ENCODE measurements at regions of chr12 and their contacts with region 1.

Region 1: GRCh38 chr12:22088886-22089285 is 42.9 kb downstream of the CMAS start:
- DNase-seq: no peak

Region 2: GRCh38 chr12:22014783-22015144 is 74.1 kb before region 1 on chr12:
- intact Hi-C with region 1: no loop called
- DNase-seq: no peak

Region 3: GRCh38 chr12:22190969-22191368 is 102.1 kb after region 1 on chr12:
- intact Hi-C with region 1: no loop called
- DNase-seq: no peak

Region 4: GRCh38 chr12:22443379-22444316 is 354.8 kb after region 1 on chr12:
- intact Hi-C with region 1: loop called (anchors 5 kb)
- DNase-seq: peak in 40 of 42 donors; percentile 21 to 84 (median 64)

Region 5: DNA sequence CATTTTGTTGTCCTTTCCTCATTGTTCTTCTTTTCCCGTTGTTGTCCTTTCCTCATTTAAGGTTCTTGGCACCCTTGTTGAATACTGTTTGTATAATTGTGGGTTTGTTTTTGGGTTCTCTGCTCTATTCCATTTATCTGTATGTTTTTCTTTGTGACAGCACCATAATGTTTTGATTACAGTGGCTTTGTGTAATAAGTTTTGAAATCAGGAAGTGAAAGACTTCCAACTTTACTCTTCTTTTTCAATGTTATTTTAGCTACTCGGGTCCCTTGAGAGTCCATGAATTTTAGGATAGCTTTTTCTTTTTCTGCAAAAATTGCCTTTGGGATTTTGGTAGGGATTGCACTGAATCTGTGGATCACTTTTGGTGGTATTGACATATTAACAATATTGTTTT is 564.2 kb after region 1 on chr12:
- intact Hi-C with region 1: no loop called
- DNase-seq: no peak

Measured in head of caudate nucleus (tissue), 42 donors.